PC-3 (cell line): ENCODE measurements at regions of chr17 and their contacts with region 1.

Region 1: GRCh38 chr17:51085185-51085805 is 35.4 kb downstream of the SPAG9 start:
- DNase-seq: peak; percentile 90
- ATAC-seq: peak; percentile 76
- H3K4me3 ChIP-seq: peak overlapping the region; percentile 56
- H3K27ac ChIP-seq: peak overlapping the region; percentile 95
- H3K4me1 ChIP-seq: peaks cover 33% of the 10 kb centered on the region
- H3K27me3 ChIP-seq: no peaks in the 10 kb centered on the region
- CTCF ChIP-seq: no peak

Region 2: GRCh38 chr17:50944054-50944901 is 141.0 kb before region 1 on chr17:
- CTCF ChIA-PET with region 1: no interaction called
- POLR2A ChIA-PET with region 1: no interaction called
- intact Hi-C with region 1: no loop called
- DNase-seq: peak; percentile 79
- ATAC-seq: peak; percentile 84
- H3K4me3 ChIP-seq: peak overlapping the region; percentile 70
- H3K27ac ChIP-seq: peak overlapping the region; percentile 11; the same call in 1 of the 2 replicates
- H3K4me1 ChIP-seq: peaks cover 27% of the 10 kb centered on the region
- H3K27me3 ChIP-seq: no peaks in the 10 kb centered on the region
- CTCF ChIP-seq: no peak

Region 3: GRCh38 chr17:51029568-51030463 is 55.5 kb before region 1 on chr17:
- CTCF ChIA-PET with region 1: no interaction called
- POLR2A ChIA-PET with region 1: no interaction called
- intact Hi-C with region 1: no loop called
- DNase-seq: no peak
- ATAC-seq: no peak
- H3K4me3 ChIP-seq: no peak overlapping the region
- H3K27ac ChIP-seq: no peak overlapping the region
- H3K4me1 ChIP-seq: no peaks in the 10 kb centered on the region; the same call in 1 of the 2 replicates
- H3K27me3 ChIP-seq: no peaks in the 10 kb centered on the region
- CTCF ChIP-seq: no peak

Region 4: GRCh38 chr17:51064061-51064735 is 21.1 kb before region 1 on chr17:
- CTCF ChIA-PET with region 1: no interaction called
- POLR2A ChIA-PET with region 1: interaction called, 18 read pairs
- intact Hi-C with region 1: loop called (anchors 1 kb)
- DNase-seq: peak; percentile 73
- ATAC-seq: peak; percentile 74
- H3K4me3 ChIP-seq: no peak overlapping the region
- H3K27ac ChIP-seq: peak overlapping the region; percentile 69
- H3K4me1 ChIP-seq: peaks cover 51% of the 10 kb centered on the region
- H3K27me3 ChIP-seq: no peaks in the 10 kb centered on the region
- CTCF ChIP-seq: no peak

Region 5: GRCh38 chr17:51200295-51200694 is 115.0 kb after region 1 on chr17:
- CTCF ChIA-PET with region 1: no interaction called
- POLR2A ChIA-PET with region 1: no interaction called
- intact Hi-C with region 1: no loop called
- DNase-seq: no peak
- ATAC-seq: no peak
- H3K4me3 ChIP-seq: no peak overlapping the region
- H3K27ac ChIP-seq: no peak overlapping the region
- H3K4me1 ChIP-seq: no peaks in the 10 kb centered on the region
- H3K27me3 ChIP-seq: no peaks in the 10 kb centered on the region
- CTCF ChIP-seq: no peak